ENCODE measurements at regions of chr10 and their contacts with region 1.

Region 1: DNA sequence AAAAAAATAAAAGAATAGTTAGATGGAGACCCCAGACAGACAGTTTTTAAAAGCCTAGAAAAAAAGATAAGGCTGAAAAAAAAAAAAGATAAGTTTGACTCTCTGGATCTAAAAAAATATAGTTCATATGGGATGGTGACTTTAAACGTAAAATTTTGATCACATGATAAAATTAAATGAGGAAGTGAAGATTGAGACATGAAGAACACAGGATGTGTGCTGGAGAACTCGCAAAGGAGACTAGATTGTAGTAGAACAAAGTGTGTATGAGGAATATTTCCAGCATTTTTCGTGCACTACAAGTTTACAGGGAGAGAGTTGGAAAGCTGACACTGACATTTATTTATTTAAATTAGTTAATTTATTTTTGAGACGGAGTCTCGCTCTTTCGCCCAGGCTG is 286.4 kb downstream of the PRPF18 start:
- DNase-seq: peak; percentile 40 to 78 (median 66)
- H3K4me3 ChIP-seq: peak overlapping the region in 1 of 3 experiments; percentile 34
- H3K4me3 Mint-ChIP-seq: peak overlapping the region in 1 of 2 donors; percentile 39
- H3K27ac ChIP-seq: peak overlapping the region; percentile 85 to 87
- H3K27ac Mint-ChIP-seq: peak overlapping the region; percentile 85 to 97 (median 95)
- H3K4me1 ChIP-seq: peaks cover 43 to 46% of the 10 kb centered on the region in 2 donors
- H3K4me1 Mint-ChIP-seq: peaks cover 48% of the 10 kb centered on the region
- H3K27me3 ChIP-seq: no peaks in the 10 kb centered on the region
- H3K27me3 Mint-ChIP-seq: peaks cover 1 to 11% (median 3%) of the 10 kb centered on the region in 3 donors
- CTCF ChIP-seq: no peak

Region 2: DNA sequence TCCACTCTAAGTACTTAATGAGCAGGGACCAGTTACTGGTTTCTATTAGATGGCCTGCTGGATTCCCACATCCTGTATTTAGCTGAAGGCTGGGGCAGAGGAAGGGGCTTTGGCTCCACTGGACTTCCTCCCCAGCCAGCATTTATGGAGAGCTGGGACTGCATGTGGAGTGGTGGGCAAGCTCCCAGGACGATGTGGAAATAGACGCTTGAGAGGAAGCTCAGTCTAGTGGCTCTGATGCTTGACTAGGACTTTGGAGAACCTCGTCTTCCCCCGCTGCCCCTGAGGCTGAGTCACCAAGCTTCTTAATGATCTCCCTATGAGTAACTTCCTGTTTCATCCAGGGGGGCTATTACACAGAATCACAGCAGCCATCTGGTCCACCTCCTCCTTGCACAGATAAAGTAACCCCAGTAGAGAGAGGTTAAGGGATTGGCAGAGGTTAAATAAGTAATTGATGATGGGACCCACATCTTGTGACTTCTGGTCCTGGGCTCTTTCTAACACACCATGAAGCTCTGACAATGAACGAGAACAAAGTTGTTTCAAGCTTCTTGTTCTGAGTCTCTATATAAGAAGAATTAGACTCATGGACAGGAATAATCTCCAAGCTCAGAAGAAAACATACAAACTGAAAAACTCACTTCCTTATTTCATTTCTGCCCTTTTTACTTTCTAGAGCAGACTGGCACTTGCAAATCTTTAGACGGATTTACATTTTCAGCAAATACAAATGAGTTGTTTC is 160.2 kb before region 1 on chr10:
- intact Hi-C with region 1: loop called in 1 of 2 experiments (anchors 5 kb)
- DNase-seq: peak; percentile 84 to 97 (median 95)
- H3K4me3 ChIP-seq: peak overlapping the region in 1 of 3 experiments; percentile 33
- H3K4me3 Mint-ChIP-seq: peak overlapping the region in 1 of 2 donors; percentile 63
- H3K27ac ChIP-seq: peak overlapping the region; percentile 45 to 77
- H3K27ac Mint-ChIP-seq: peak overlapping the region; percentile 74 to 95 (median 88)
- H3K4me1 ChIP-seq: peaks cover 25% of the 10 kb centered on the region in 2 donors
- H3K4me1 Mint-ChIP-seq: peaks cover 26% of the 10 kb centered on the region
- H3K27me3 ChIP-seq: no peaks in the 10 kb centered on the region
- H3K27me3 Mint-ChIP-seq: peaks cover 3 to 7% (median 5%) of the 10 kb centered on the region in 3 donors
- CTCF ChIP-seq: no peak

Region 3: DNA sequence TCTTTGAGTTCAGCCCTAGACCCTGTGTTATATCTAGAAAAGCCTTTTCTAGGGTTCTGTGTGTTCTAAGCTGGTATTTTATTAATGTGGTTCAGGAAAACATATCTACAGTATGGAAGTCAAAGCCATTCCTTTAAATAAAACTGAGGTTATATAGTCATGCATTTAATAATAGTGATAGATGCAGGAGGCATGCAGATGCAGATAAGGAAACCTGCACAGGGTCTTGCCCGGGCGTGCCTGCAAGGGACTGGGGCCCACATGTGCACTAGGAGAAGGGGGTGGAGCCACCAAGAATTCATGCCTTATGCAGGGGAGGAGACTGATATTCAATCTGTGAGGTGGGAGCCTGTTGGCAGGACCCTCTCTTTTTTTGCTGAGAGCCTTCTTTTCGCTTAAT is 114.9 kb before region 1 on chr10:
- intact Hi-C with region 1: no loop called
- DNase-seq: no peak
- H3K4me3 ChIP-seq: no peak overlapping the region
- H3K4me3 Mint-ChIP-seq: no peak overlapping the region
- H3K27ac ChIP-seq: no peak overlapping the region
- H3K27ac Mint-ChIP-seq: no peak overlapping the region
- H3K4me1 ChIP-seq: peaks cover 16 to 19% of the 10 kb centered on the region in 2 donors
- H3K4me1 Mint-ChIP-seq: peaks cover 21% of the 10 kb centered on the region
- H3K27me3 ChIP-seq: no peaks in the 10 kb centered on the region
- H3K27me3 Mint-ChIP-seq: peaks cover 0 to 4% (median 0%) of the 10 kb centered on the region in 3 donors
- CTCF ChIP-seq: no peak